Activated CD4-positive, alpha-beta memory T cell treated with anti-CD3 and anti-CD28 coated beads for 36 hours (primary cell): ENCODE measurements at regions of chr1 and their contacts with region 1.

Region 1: DNA sequence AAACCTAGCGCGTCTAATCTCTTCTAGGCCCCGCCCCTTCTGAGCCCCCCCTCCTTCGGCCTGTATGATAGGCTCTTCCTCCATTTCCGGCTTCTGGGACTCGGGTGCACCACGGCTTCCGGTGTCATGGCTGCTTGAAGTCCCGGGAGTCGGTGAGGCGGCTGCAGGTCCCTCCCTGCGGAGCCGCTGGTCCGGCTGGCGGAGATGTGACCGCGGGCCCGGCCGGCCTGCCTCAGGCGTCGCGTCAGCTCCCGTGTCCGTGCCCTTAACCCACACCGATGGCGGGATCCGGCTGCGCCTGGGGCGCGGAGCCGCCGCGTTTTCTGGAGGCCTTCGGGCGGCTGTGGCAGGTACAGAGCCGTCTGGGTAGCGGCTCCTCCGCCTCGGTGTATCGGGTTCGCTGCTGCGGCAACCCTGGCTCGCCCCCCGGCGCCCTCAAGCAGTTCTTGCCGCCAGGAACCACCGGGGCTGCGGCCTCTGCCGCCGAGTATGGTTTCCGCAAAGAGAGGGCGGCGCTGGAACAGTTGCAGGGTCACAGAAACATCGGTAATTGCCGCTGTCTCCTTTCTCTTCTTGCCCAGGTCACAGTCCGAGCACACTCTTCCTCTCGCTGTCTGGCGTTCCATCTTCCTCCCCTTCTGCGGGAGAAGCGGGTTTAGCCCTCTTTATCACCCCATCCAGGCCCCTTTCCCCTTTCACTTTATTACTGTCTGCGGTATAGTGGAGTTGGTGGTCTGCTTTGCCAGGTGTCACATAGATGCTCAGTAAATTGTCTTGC is at the start of gene UHMK1:
- DNase-seq: peak; percentile 94
- H3K4me3 Mint-ChIP-seq: peak within 1 kb of the TSS; percentile 98
- H3K27ac Mint-ChIP-seq: peak within 1 kb of the TSS; percentile 85
- H3K4me1 Mint-ChIP-seq: peaks cover 34% of the 10 kb centered on the region
- H3K27me3 Mint-ChIP-seq: no peaks in the 10 kb centered on the region
- total RNA-seq, gene UHMK1: 51.0 to 51.6 TPM

Region 2: DNA sequence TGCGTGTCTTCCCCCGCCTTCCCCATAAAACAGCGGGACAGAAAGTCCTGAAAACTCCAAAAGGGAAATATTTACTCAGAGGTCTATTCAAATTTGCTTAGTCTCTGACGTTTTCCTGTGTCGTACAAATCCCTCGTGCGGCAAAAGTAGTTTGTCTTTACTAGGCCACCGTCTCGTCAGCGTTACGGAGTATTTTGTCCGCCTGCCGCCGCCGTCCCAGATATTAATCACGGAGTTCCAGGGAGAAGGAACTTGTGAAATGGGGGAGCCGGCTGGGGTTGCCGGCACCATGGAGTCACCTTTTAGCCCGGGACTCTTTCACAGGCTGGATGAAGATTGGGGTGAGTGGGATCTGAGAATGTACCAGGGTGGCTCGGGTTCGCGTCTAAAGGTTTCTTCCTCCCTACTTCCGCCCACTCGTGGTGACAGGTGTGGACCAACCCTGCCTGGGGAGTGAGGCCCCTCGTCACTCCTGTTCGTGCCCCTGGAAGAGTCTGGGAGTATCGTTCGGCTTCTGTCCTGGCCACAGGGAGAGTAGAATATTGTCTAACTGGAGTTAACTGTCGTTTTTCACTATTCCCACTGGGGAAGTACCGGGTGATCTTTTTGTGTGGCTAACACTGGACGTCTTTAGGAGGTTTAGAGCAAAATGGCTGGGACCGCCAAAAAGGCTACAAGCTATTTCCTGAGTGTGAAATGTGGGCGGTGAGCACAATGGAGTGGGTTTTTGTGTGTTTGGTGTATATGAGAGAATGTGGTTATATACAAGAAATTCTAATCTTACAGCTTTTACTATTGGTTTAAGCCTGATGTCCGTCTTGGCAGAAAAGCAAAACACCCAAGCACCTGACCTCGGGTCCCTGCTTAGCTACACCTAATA is 731.6 kb before region 1 on chr1 and contains the start of gene ATF6:
- CTCF ChIA-PET with region 1: no interaction called
- POLR2A ChIA-PET with region 1: no interaction called
- intact Hi-C with region 1: loop called (anchors 10 kb)
- DNase-seq: peak; percentile 90
- H3K4me3 Mint-ChIP-seq: peak within 1 kb of the TSS; percentile 98
- H3K27ac Mint-ChIP-seq: peak within 1 kb of the TSS; percentile 93
- H3K4me1 Mint-ChIP-seq: peaks cover 51% of the 10 kb centered on the region
- H3K27me3 Mint-ChIP-seq: no peaks in the 10 kb centered on the region
- total RNA-seq, gene ATF6: 20.8 to 23.0 TPM

Region 3: DNA sequence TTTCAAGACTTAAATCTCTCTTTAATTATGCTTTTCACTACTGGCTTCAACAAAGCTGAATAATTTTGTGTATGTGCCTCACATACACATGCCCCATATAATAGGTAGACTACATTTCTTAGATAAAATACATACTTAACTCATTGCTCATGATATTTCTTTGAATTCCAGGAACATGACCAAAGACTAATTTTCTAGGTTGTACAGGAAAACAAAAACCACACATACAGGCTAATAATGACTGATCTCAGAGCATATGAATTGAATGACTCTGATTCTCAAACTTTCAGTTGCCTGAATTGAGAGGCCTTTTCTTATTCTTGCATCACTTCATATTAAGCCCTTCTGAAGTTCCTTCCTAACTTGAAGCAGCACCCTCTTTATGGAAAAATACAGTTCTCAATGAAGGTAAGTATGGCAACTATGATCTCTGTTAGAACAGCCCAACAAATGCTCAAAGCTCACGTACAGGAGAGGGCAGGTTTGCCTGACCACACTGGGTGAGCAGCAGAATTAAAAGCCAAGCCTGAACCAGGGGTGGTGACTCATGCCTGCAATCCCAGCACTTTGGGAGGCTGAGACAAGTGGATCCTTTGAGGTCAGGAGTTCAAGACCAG is 41.0 kb after region 1 on chr1:
- CTCF ChIA-PET with region 1: interaction called, 4 read pairs
- POLR2A ChIA-PET with region 1: no interaction called
- intact Hi-C with region 1: loop called (anchors 5 kb)
- DNase-seq: peak; percentile 35
- H3K4me3 Mint-ChIP-seq: no peak overlapping the region
- H3K27ac Mint-ChIP-seq: peak overlapping the region; percentile 74
- H3K4me1 Mint-ChIP-seq: peaks cover 8% of the 10 kb centered on the region
- H3K27me3 Mint-ChIP-seq: no peaks in the 10 kb centered on the region

Region 4: DNA sequence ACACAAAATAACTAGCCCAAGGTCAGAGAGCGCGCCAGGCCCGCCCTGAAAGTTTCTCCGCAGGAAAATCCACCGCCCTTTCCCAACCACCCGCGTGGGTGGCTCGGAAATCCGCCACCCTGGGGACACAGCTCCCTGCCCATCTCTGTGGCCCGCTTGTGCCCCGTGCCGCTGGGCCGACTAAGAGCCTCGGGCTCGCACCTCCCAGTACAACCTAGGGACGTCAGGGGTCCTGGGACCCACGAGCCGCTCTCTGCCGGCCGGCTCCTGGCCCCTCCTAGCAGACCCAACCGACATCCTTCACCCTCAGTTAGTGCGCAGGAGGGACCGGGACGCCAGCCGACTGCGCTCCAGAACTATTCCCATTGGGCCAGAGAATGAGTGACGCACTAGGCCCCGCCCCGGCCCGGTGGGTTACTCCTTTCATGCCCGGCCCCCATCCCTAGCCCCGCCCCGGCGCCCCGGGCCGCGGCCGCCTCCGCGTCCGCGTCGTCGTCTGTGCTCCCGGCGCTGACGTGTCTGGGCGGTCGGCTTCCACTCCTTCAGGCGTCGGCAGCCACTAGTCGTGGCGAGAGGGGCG is 63.2 kb after region 1 on chr1:
- CTCF ChIA-PET with region 1: interaction called, 3 read pairs
- POLR2A ChIA-PET with region 1: interaction called, 3 read pairs
- intact Hi-C with region 1: loop called (anchors 1 kb)
- DNase-seq: peak; percentile 98
- H3K4me3 Mint-ChIP-seq: peak overlapping the region; percentile 93
- H3K27ac Mint-ChIP-seq: peak overlapping the region; percentile 93
- H3K4me1 Mint-ChIP-seq: peaks cover 37% of the 10 kb centered on the region
- H3K27me3 Mint-ChIP-seq: no peaks in the 10 kb centered on the region

Region 5: GRCh38 chr1:162663589-162664106 is 165.7 kb after region 1 on chr1:
- CTCF ChIA-PET with region 1: no interaction called
- POLR2A ChIA-PET with region 1: no interaction called
- intact Hi-C with region 1: no loop called
- DNase-seq: no peak
- H3K4me3 Mint-ChIP-seq: no peak overlapping the region
- H3K27ac Mint-ChIP-seq: no peak overlapping the region
- H3K4me1 Mint-ChIP-seq: no peaks in the 10 kb centered on the region
- H3K27me3 Mint-ChIP-seq: no peaks in the 10 kb centered on the region

Region 6: GRCh38 chr1:163321311-163322305 is 823.7 kb after region 1 on chr1 and contains the start of gene NUF2:
- CTCF ChIA-PET with region 1: no interaction called
- POLR2A ChIA-PET with region 1: no interaction called
- intact Hi-C with region 1: loop called (anchors 5 kb)
- DNase-seq: peak; percentile 98
- H3K4me3 Mint-ChIP-seq: peak within 1 kb of the TSS; percentile 92
- H3K27ac Mint-ChIP-seq: peak within 1 kb of the TSS; percentile 98
- H3K4me1 Mint-ChIP-seq: peaks cover 21% of the 10 kb centered on the region
- H3K27me3 Mint-ChIP-seq: no peaks in the 10 kb centered on the region
- total RNA-seq, gene NUF2: 66.3 to 67.4 TPM